PC-9 (cell line): ENCODE measurements at regions of chr1 and their contacts with region 1.

Region 1: GRCh38 chr1:155893389-155894142 is 17.6 kb downstream of the RIT1 start:
- DNase-seq: peak; percentile 44 to 87
- H3K4me3 ChIP-seq: peak overlapping the region; percentile 11; the same call in 1 of the 2 replicates
- H3K27ac ChIP-seq: peak overlapping the region; percentile 90
- H3K4me1 ChIP-seq: peaks cover 24% of the 10 kb centered on the region
- H3K27me3 ChIP-seq: no peaks in the 10 kb centered on the region
- CTCF ChIP-seq: no peak

Region 2: DNA sequence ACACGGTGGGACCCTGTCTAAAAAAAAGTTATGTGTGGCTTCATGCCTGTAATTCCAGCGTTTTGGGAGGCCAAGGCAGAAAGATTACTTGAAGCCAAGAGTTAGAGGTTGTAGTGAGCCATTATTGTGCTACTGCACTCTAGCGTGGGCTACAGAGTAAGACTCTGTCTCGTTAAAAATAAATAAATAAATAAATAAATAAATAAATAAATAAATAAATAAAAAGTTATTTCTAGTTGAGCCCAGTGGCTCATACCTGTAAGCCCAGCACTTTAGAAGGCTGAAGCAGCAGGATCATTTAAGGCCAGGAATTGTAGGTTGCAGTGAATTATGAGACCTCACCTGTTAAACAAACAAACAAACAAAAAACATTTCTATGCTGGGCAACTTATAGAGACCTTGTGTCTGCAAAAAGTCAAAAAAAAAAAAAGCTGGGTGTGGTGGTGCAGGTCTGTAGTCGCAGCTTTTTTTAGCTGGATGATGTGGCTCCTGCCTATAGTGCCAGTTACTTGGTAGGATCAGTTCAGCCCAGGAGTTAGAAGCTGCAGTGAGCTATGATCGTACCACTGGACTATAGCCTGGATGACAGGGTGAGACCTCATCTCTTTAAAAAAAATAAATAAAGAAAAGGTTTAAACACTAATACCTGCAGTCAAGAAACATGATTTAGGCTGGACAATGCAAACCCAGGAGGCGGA is 62.1 kb before region 1 on chr1:
- CTCF ChIA-PET with region 1: no interaction called
- POLR2A ChIA-PET with region 1: no interaction called
- intact Hi-C with region 1: no loop called
- DNase-seq: no peak
- H3K4me3 ChIP-seq: no peak overlapping the region
- H3K27ac ChIP-seq: no peak overlapping the region
- H3K4me1 ChIP-seq: no peaks in the 10 kb centered on the region
- H3K27me3 ChIP-seq: no peaks in the 10 kb centered on the region
- CTCF ChIP-seq: no peak

Region 3: GRCh38 chr1:155911156-155912055 is 17.8 kb after region 1 on chr1 and contains the start of gene RIT1:
- CTCF ChIA-PET with region 1: no interaction called
- POLR2A ChIA-PET with region 1: interaction called, 8 read pairs
- intact Hi-C with region 1: loop called (anchors 2 kb)
- DNase-seq: peak; percentile 69 to 81
- H3K4me3 ChIP-seq: peak within 1 kb of the TSS; percentile 73
- H3K27ac ChIP-seq: peak within 1 kb of the TSS; percentile 94
- H3K4me1 ChIP-seq: peaks cover 45% of the 10 kb centered on the region
- H3K27me3 ChIP-seq: no peaks in the 10 kb centered on the region
- CTCF ChIP-seq: no peak
- total RNA-seq, gene RIT1: 55.8 and 59.2 TPM in 2 replicates

Region 4: GRCh38 chr1:155976062-155976912 is 82.7 kb after region 1 on chr1:
- CTCF ChIA-PET with region 1: no interaction called
- POLR2A ChIA-PET with region 1: no interaction called
- intact Hi-C with region 1: no loop called
- DNase-seq: peak in 1 of 2 experiments; percentile 44
- H3K4me3 ChIP-seq: peak overlapping the region; percentile 93
- H3K27ac ChIP-seq: peak overlapping the region; percentile 96
- H3K4me1 ChIP-seq: peaks cover 46% of the 10 kb centered on the region
- H3K27me3 ChIP-seq: no peaks in the 10 kb centered on the region
- CTCF ChIP-seq: no peak